ENCODE measurements at regions of chr16 and their contacts with region 1.

Region 1: DNA sequence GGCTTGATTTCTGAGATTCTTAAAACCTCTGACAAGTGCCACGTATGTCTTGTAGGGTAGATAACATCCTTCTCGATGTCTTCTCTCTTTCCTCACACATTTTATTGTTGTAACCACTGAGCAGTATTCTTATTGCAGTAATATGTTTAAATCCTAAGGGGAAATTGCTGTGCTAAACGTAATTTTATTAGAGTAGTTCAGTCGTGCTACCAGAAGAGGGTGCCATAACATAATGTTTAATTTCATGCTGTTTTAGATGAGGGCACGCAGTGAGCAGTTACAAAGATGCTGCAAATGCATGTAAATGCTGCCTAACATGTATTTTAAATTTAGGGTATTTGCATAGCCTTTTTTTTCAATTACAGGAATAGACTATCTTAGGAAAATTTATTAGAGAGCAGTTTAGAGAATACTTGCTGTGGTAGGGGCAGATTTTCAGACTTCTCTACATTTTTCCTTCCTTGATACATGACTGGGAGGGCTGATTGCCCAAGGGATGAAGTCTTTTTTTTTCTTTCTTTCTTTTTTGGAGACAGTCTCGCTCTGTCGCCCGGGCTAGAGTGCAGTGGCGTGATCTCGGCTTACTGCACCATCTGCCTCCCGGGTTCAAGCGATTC is 51.7 kb downstream of the GAN start:
- DNase-seq: peak; percentile 73
- ATAC-seq: peak; percentile 85
- H3K4me3 ChIP-seq: no peak overlapping the region
- H3K4me3 Mint-ChIP-seq: no peak overlapping the region
- H3K27ac ChIP-seq: no peak overlapping the region
- H3K27ac Mint-ChIP-seq: no peak overlapping the region
- H3K4me1 ChIP-seq: no peaks in the 10 kb centered on the region
- H3K4me1 Mint-ChIP-seq: no peaks in the 10 kb centered on the region
- H3K27me3 ChIP-seq: no peaks in the 10 kb centered on the region
- H3K27me3 Mint-ChIP-seq: no peaks in the 10 kb centered on the region
- CTCF ChIP-seq: peak; percentile 92

Region 2: DNA sequence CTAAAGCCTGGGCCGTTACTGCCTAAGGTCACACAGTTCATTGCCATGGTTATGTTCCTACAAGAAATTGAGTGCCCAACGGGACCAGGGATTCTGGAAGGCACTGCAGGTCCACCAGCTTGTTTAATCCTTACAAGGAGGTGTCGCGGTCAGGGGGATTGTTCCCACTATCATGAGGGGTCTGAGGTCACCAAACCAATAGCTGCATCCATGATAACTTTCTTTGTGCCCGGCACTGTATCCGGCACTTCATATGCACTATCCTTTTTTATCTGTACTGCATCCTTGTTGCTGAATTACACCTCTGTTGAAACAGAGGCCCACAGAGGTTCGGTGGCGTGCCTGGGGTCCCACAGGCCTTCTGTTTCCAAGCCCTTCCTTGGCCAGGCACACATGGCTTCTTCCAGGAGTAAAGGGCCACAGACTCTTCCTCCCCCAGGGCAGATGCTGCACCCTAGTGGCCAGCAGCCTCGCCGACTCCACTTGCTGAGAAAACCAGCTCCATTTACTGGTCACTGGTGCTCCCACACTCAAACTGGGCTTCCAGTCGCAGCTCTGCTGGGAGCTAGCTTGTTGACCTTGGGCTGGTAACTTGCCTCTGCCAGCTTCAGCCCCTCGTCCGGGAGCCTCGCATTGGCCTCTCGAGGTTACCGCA is 330.7 kb after region 1 on chr16:
- CTCF ChIA-PET with region 1: interaction called, 21 read pairs
- POLR2A ChIA-PET with region 1: no interaction called
- intact Hi-C with region 1: loop called (anchors 1 kb)
- DNase-seq: peak; percentile 30
- ATAC-seq: no peak
- H3K4me3 ChIP-seq: no peak overlapping the region
- H3K4me3 Mint-ChIP-seq: no peak overlapping the region
- H3K27ac ChIP-seq: no peak overlapping the region
- H3K27ac Mint-ChIP-seq: no peak overlapping the region
- H3K4me1 ChIP-seq: no peaks in the 10 kb centered on the region
- H3K4me1 Mint-ChIP-seq: no peaks in the 10 kb centered on the region
- H3K27me3 ChIP-seq: no peaks in the 10 kb centered on the region
- H3K27me3 Mint-ChIP-seq: no peaks in the 10 kb centered on the region
- CTCF ChIP-seq: peak; percentile 40

Region 3: GRCh38 chr16:81730090-81731051 is 363.9 kb after region 1 on chr16:
- CTCF ChIA-PET with region 1: interaction called, 84 read pairs
- POLR2A ChIA-PET with region 1: no interaction called
- intact Hi-C with region 1: no loop called
- DNase-seq: peak; percentile 77
- ATAC-seq: peak; percentile 85
- H3K4me3 ChIP-seq: peak overlapping the region in 4 of 5 experiments; percentile 44 to 61 (median 55)
- H3K4me3 Mint-ChIP-seq: peak overlapping the region; percentile 90
- H3K27ac ChIP-seq: peak overlapping the region in 1 of 2 donors; percentile 62
- H3K27ac Mint-ChIP-seq: peak overlapping the region; percentile 90
- H3K4me1 ChIP-seq: peaks cover 12 to 15% of the 10 kb centered on the region in 2 donors
- H3K4me1 Mint-ChIP-seq: peaks cover 22% of the 10 kb centered on the region
- H3K27me3 ChIP-seq: no peaks in the 10 kb centered on the region
- H3K27me3 Mint-ChIP-seq: no peaks in the 10 kb centered on the region
- CTCF ChIP-seq: peak; percentile 74

Region 4: DNA sequence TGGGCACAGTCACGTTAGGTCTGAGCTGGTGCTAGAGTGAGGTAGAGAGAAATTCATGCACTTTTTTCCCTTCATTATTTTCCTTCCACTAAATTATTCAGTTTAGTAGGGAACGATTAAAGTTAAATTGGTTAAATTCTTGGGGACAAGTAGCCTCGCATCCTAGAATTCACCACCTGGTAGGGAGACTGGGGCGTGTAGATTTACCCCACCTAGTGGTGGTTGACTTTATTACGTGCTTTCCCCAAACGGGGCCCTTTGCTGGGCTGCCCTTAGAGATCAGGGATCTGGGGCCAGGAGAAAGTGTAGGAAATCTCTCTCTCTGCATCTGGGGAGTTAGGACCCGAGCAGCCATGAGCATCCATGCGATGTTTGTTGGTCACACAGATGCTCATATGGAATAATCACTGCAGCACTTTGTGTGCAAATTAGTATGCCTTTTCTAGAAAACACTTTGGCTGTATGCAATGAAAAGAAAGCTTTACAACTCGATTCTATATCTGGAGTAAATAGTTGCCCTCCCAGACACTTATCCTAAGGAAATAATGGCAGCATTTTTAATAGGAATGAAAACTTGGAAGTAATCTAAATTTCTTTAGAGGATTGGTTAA is 519.7 kb after region 1 on chr16:
- CTCF ChIA-PET with region 1: interaction called, 6 read pairs
- POLR2A ChIA-PET with region 1: no interaction called
- intact Hi-C with region 1: loop called (anchors 5 kb)
- DNase-seq: peak; percentile 59
- ATAC-seq: peak; percentile 74
- H3K4me3 ChIP-seq: no peak overlapping the region
- H3K4me3 Mint-ChIP-seq: no peak overlapping the region
- H3K27ac ChIP-seq: peak overlapping the region in 1 of 2 donors; percentile 32
- H3K27ac Mint-ChIP-seq: peak overlapping the region; percentile 7
- H3K4me1 ChIP-seq: no peaks in the 10 kb centered on the region
- H3K4me1 Mint-ChIP-seq: peaks cover 2% of the 10 kb centered on the region
- H3K27me3 ChIP-seq: no peaks in the 10 kb centered on the region
- H3K27me3 Mint-ChIP-seq: no peaks in the 10 kb centered on the region
- CTCF ChIP-seq: peak; percentile 93